GM12878 (cell line): ENCODE measurements at regions of chr2 and their contacts with region 1.

Region 1: DNA sequence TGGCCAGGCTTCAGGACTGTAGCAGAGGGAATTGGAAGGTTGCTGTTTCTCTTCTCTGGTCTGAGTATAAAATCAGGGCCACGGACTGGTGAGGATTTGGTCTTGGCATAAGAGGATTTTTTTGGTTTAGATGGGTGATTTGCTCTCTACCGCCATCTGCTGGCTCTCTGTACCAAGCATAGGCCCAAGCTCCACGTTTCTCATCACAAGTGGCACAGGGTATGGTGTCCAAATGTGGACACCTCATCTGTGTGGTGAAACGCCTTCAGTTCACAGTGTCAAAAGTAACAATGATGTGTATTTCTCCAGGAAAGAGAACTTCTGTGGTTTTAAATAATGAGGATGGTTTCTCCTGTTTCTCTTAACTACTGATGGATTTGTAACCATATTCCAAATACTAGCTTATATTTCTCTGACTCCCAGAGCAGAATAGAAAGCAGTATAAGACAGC is 115.1 kb downstream of the EML6 start:
- DNase-seq: peak; percentile 20
- ATAC-seq: peak; percentile 98
- H3K4me3 ChIP-seq: no peak overlapping the region
- H3K27ac ChIP-seq: no peak overlapping the region
- H3K4me1 ChIP-seq: no peaks in the 10 kb centered on the region
- H3K27me3 ChIP-seq: no peaks in the 10 kb centered on the region
- CTCF ChIP-seq: peak; percentile 82 to 91 (median 91)
- EP300 ChIP-seq: no peak
- POLR2A ChIP-seq: no peak
- RAD21 ChIP-seq: peak; percentile 74

Region 2: DNA sequence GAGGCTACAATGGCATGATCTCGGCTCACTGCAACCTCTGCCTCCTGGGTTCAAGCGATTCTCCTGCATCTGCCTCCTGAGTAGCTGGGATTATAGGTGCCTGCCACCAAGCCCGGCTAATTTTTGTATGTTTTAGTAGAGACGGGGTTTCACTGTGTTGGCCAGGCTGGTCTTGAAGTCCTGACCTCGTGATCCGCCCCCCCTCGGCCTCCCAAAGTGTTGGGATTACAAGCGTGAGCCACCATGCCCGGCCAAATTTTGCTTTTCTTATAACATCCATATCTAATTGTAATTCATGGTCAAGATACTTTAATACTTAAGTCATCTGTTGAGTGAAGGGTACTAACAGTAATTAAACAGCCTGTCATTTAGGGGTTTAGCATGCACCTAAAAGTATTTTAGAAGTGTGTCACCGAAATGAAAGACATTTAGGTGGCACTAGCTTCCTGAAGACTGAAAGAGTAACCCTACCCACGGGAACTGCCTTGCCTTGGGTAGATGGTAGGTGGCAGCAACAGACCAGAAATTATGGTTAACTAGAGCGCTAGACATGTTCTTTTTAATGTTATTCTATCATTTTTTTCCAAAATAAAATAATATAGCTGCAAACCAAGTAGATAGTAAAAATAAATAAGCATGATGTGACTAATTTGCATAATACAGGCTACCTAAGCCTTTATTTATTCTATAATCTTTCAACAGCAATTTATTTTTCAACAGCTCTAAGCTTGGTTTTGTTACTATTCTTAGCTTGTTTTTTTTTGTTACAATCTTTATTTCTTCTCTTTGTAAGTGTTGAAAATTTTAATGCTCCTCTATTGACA is 731.8 kb before region 1 on chr2:
- CTCF ChIA-PET with region 1: interaction called, 19 read pairs
- POLR2A ChIA-PET with region 1: no interaction called
- RAD21 ChIA-PET with region 1: interaction called, 13 read pairs
- SMC1A ChIA-PET with region 1: interaction called, 7 read pairs
- in situ Hi-C with region 1: no loop called
- intact Hi-C with region 1: loop called (anchors 5 kb)
- DNase-seq: no peak
- ATAC-seq: peak; percentile 83
- H3K4me3 ChIP-seq: no peak overlapping the region
- H3K27ac ChIP-seq: no peak overlapping the region
- H3K4me1 ChIP-seq: no peaks in the 10 kb centered on the region
- H3K27me3 ChIP-seq: no peaks in the 10 kb centered on the region
- CTCF ChIP-seq: peak; percentile 59 to 73 (median 60); a peak in 5 of 6 replicates
- EP300 ChIP-seq: no peak
- POLR2A ChIP-seq: no peak
- RAD21 ChIP-seq: peak; percentile 73

Region 3: GRCh38 chr2:54763636-54764291 is 74.8 kb before region 1 on chr2:
- CTCF ChIA-PET with region 1: interaction called, 15 read pairs
- POLR2A ChIA-PET with region 1: no interaction called
- RAD21 ChIA-PET with region 1: interaction called, 4 read pairs
- SMC1A ChIA-PET with region 1: interaction called, 4 read pairs
- in situ Hi-C with region 1: no loop called
- intact Hi-C with region 1: loop called (anchors 1 kb)
- DNase-seq: no peak
- ATAC-seq: peak; percentile 83
- H3K4me3 ChIP-seq: no peak overlapping the region
- H3K27ac ChIP-seq: no peak overlapping the region
- H3K4me1 ChIP-seq: peaks cover 1% of the 10 kb centered on the region
- H3K27me3 ChIP-seq: no peaks in the 10 kb centered on the region; a peak in 2 of 4 replicates
- CTCF ChIP-seq: peak; percentile 50 to 71 (median 61)
- EP300 ChIP-seq: no peak
- POLR2A ChIP-seq: no peak
- RAD21 ChIP-seq: peak; percentile 49

Region 4: DNA sequence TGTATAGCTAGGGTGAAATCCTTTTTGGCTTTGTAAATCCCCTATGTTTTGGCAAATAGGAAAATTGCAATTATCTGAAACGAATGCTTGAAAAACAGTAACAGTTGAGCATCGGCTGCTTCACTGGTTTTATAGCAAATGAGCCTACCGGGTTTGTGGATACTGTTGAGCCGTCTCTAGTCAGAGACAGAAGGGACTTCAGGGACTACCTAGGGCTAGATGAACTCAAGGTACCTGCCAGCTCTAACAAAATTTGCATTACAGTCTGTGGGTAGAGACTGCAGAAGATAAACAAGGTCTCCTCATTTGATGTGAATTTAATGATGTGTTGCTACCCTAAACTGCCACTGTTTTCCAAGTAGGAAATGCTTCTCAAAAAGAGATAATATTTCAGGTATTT is 14.0 kb before region 1 on chr2:
- CTCF ChIA-PET with region 1: interaction called, 18 read pairs
- POLR2A ChIA-PET with region 1: no interaction called
- RAD21 ChIA-PET with region 1: interaction called, 3 read pairs
- SMC1A ChIA-PET with region 1: no interaction called
- in situ Hi-C with region 1: no loop called
- intact Hi-C with region 1: no loop called
- DNase-seq: no peak
- ATAC-seq: no peak
- H3K4me3 ChIP-seq: no peak overlapping the region
- H3K27ac ChIP-seq: no peak overlapping the region
- H3K4me1 ChIP-seq: no peaks in the 10 kb centered on the region
- H3K27me3 ChIP-seq: peaks cover 0 to 4% of the 10 kb centered on the region in 2 experiments; a peak in 1 of 4 replicates
- CTCF ChIP-seq: no peak
- EP300 ChIP-seq: no peak
- POLR2A ChIP-seq: no peak
- RAD21 ChIP-seq: no peak

Region 5: DNA sequence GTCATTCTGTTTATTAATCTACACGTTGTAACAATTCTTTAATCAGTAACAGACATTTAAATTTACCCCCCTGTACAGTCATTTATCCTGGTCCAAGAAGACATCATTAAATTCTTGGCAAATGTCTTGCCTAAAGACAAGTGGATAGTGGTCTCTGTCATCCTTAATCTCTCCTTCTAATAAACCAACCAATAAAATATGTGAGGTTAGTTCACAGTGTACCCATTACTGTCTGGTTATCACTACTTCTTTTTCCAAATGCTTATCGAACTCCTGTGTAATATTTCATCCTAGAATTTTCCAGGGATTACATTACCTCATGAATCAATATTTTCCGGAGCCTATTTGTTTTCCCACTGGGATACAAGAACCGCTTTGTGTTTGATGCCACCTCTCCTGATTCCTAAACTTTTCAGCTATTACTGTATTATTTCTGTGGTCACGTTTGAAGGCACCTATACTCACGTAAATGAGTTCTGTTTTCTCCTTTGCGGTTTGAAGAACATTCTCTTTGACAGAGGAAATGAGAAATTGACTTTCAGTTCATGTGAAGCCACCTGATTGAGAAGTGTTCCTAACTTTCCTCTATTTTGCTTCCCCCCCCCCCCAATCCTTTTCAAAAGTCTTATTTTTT is 80.2 kb after region 1 on chr2:
- CTCF ChIA-PET with region 1: no interaction called
- POLR2A ChIA-PET with region 1: no interaction called
- RAD21 ChIA-PET with region 1: no interaction called
- SMC1A ChIA-PET with region 1: no interaction called
- in situ Hi-C with region 1: no loop called
- intact Hi-C with region 1: no loop called
- DNase-seq: no peak
- ATAC-seq: no peak
- H3K4me3 ChIP-seq: no peak overlapping the region
- H3K27ac ChIP-seq: no peak overlapping the region
- H3K4me1 ChIP-seq: no peaks in the 10 kb centered on the region
- H3K27me3 ChIP-seq: no peaks in the 10 kb centered on the region
- CTCF ChIP-seq: no peak
- EP300 ChIP-seq: no peak
- POLR2A ChIP-seq: no peak
- RAD21 ChIP-seq: no peak

Region 6: DNA sequence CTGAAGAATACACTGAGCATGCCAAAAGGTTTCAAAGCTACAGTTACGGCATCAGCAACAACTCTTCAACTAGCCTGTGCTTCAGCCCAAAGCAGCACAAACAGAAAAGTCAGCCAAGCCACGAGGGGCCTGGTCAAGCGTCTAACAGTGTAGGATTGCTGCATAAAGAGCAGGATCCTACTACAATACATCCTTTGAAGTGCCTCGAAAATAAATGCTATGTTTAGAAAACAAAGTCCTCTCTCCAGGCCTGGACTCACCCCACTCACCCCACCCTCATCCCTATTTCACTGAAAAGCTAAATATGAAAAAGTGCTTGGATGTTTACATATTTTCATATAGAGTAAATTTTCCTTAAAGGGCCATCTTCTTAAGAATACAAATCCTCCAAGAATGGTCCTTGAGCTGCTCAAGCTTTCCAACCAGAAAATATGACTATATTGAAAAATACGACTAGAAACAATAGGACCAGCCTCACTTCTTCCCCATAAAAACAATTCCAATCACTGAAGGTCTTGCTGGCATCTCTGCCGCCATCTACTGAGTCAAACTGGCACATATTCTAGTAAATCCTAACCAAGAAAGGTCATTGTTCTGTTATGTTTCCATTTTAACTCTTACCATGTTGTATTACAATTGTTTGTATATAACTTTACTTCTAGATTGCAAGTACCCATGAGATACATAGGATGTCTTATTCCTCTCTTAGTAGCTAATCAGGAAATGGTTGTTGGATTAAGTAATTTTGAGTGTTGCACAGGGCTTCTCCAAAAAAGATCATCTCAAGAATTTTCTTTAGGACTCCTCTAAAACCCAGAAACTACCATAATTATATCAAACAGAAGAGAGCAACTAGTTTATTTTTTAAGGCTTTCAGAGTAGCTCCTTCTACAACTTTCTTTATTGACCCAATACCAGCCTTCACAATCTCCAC is 329.9 kb after region 1 on chr2:
- CTCF ChIA-PET with region 1: interaction called, 13 read pairs
- POLR2A ChIA-PET with region 1: interaction called, 3 read pairs
- RAD21 ChIA-PET with region 1: interaction called, 5 read pairs
- SMC1A ChIA-PET with region 1: interaction called, 12 read pairs
- in situ Hi-C with region 1: no loop called
- intact Hi-C with region 1: loop called (anchors 10 kb)
- DNase-seq: no peak
- ATAC-seq: peak; percentile 83
- H3K4me3 ChIP-seq: no peak overlapping the region
- H3K27ac ChIP-seq: no peak overlapping the region
- H3K4me1 ChIP-seq: no peaks in the 10 kb centered on the region
- H3K27me3 ChIP-seq: no peaks in the 10 kb centered on the region
- CTCF ChIP-seq: peak; percentile 73 to 74 (median 73)
- EP300 ChIP-seq: no peak
- POLR2A ChIP-seq: no peak
- RAD21 ChIP-seq: peak; percentile 89

Region 7: DNA sequence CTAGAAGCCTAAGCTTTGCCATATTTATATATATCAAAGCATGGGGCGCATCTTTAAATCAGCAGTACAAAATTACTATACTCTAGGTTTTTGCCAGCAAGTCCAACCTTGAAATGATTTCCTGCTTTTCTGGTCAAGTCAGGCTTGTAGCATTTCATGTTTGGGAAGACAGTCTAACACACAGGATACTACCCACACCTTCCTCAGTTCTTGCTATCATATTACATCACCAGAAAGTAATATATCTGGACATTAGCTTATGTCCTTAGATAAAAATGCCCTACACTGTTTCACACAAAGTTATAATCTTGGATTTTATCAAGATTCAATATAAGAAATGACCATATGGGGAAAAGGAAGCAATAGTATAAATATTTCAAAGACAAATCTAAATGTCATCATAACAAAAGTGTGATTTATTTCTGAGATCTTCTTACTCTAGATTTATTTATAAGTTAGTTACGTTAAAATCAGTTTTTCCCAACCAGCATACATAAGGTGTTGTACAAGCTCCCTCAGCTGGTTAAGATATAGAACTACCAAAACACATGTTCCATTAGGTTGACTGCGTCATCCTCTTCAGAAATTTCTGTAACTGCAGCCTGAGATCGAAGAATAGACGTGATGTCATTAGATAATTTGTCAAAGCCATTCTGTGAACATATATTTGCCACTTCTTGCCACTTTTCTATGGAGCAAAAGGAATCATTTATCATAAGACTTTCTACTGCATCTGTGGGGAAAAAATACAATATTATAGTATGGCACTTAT is 336.8 kb after region 1 on chr2:
- CTCF ChIA-PET with region 1: interaction called, 15 read pairs
- POLR2A ChIA-PET with region 1: interaction called, 3 read pairs
- RAD21 ChIA-PET with region 1: interaction called, 5 read pairs
- SMC1A ChIA-PET with region 1: interaction called, 11 read pairs
- in situ Hi-C with region 1: no loop called
- intact Hi-C with region 1: loop called (anchors 10 kb)
- DNase-seq: no peak
- ATAC-seq: peak; percentile 86
- H3K4me3 ChIP-seq: no peak overlapping the region
- H3K27ac ChIP-seq: no peak overlapping the region
- H3K4me1 ChIP-seq: no peaks in the 10 kb centered on the region
- H3K27me3 ChIP-seq: no peaks in the 10 kb centered on the region
- CTCF ChIP-seq: peak; percentile 39 to 68 (median 56); a peak in 4 of 6 replicates
- EP300 ChIP-seq: no peak
- POLR2A ChIP-seq: no peak
- RAD21 ChIP-seq: peak; percentile 82

Region 8: GRCh38 chr2:55408918-55409868 is 570.6 kb after region 1 on chr2:
- CTCF ChIA-PET with region 1: no interaction called
- POLR2A ChIA-PET with region 1: no interaction called
- RAD21 ChIA-PET with region 1: no interaction called
- SMC1A ChIA-PET with region 1: no interaction called
- in situ Hi-C with region 1: no loop called
- intact Hi-C with region 1: no loop called
- DNase-seq: no peak
- ATAC-seq: peak; percentile 65
- H3K4me3 ChIP-seq: 0 out of 2 replicates have a peak overlapping the region, but pooled peaks have one; percentile 5
- H3K27ac ChIP-seq: peak overlapping the region; percentile 50; the same call in 1 of the 2 replicates
- H3K4me1 ChIP-seq: peaks cover 10% of the 10 kb centered on the region
- H3K27me3 ChIP-seq: no peaks in the 10 kb centered on the region
- CTCF ChIP-seq: no peak
- EP300 ChIP-seq: no peak
- POLR2A ChIP-seq: no peak
- RAD21 ChIP-seq: no peak